ENCODE measurements at regions of chr3 and their contacts with region 1.

Region 1: DNA sequence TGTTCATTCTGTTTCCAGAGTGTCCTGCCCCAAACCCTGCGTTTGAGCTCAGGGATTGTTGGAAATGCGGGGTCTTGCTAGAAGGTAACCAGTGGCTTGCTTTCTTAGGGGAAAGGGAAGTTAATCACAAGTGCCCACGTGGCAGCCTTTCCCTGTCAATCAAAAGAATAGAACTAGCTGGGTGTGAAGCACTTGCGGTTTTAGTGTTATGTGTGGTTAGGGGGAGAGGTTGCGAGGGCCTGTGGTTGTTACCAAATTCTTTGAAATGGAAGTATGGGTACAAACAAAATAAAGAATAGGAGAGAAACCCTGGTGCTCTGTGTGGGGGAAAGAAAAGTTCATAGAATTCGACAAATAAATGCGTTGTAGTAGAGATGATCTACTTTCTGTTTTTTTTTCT is 67.6 kb downstream of the FNDC3B start:
- DNase-seq: peak; percentile 87
- ATAC-seq: peak; percentile 55
- H3K4me3 Mint-ChIP-seq: peak overlapping the region; percentile 69
- H3K27ac Mint-ChIP-seq: peak overlapping the region; percentile 85
- H3K4me1 Mint-ChIP-seq: peaks cover 72% of the 10 kb centered on the region
- H3K27me3 Mint-ChIP-seq: peaks cover 3% of the 10 kb centered on the region
- CTCF ChIP-seq: no peak

Region 2: GRCh38 chr3:172138795-172139441 is 31.9 kb after region 1 on chr3:
- CTCF ChIA-PET with region 1: interaction called, 4 read pairs
- POLR2A ChIA-PET with region 1: interaction called, 10 read pairs
- intact Hi-C with region 1: no loop called
- DNase-seq: peak; percentile 63
- ATAC-seq: peak; percentile 62
- H3K4me3 Mint-ChIP-seq: no peak overlapping the region
- H3K27ac Mint-ChIP-seq: peak overlapping the region; percentile 63
- H3K4me1 Mint-ChIP-seq: peaks cover 52% of the 10 kb centered on the region
- H3K27me3 Mint-ChIP-seq: no peaks in the 10 kb centered on the region
- CTCF ChIP-seq: no peak